Transverse colon (tissue), 4 donors: ENCODE measurements at regions of chr19 and their contacts with region 1.

Region 1: GRCh38 chr19:40549007-40549708 is 27.5 kb upstream of the SHKBP1 start:
- DNase-seq: peak; percentile 59
- H3K4me3 ChIP-seq: no peak overlapping the region
- H3K27ac ChIP-seq: no peak overlapping the region
- H3K4me1 ChIP-seq: peaks cover 0 to 5% (median 5%) of the 10 kb centered on the region in 4 donors
- H3K27me3 ChIP-seq: peaks cover 54% of the 10 kb centered on the region
- CTCF ChIP-seq: peak in 4 of 5 experiments; percentile 23 to 54 (median 42)
- EP300 ChIP-seq: no peak
- POLR2A ChIP-seq: no peak

Region 2: DNA sequence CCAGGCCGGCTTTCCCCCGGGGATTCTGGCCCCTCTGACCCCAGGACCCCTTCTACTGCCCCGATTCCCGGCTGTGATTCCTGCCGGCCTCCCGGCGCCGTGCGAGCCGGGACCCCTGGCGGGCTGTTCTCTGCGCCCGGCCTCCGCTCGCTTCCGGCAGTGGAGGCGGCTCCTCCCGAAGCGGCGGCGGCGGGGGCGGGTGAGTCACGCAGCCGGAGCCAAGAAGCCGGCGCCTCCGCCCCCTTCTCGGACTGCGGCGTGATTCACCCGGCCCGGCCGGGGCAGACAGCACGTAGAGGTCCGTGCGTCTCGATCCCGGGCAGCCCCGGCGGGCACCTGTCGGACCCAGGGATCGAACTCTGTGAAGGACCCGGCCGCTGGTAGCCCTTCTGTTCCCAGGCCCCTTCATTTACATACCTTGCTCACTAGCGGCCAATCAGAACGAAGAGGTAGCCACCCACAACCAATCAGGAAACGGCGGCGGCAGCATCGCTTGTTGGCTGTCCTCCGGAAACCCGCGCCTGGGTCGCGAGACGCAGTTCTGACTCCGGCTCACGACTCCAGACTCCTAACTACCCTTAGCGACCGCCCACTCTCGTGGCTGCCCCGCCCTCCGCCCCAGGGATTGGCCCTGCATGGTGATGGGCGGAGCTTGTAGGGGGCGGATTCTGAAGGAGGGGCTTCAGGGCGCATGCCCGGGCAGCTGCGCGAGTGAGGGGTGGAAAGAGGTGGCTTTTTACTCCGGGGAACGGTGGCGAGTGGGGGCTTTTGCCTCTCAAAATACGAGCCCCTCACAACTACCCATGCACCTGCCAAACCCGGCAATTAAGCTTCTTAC is 123.5 kb before region 1 on chr19 and contains the start of gene SERTAD1:
- in situ Hi-C with region 1: no loop called
- intact Hi-C with region 1: no loop called
- DNase-seq: peak; percentile 100
- H3K4me3 ChIP-seq: peak within 1 kb of the TSS; percentile 66 to 99 (median 85)
- H3K27ac ChIP-seq: peak within 1 kb of the TSS; percentile 97 to 100 (median 99)
- H3K4me1 ChIP-seq: peaks cover 23 to 46% (median 37%) of the 10 kb centered on the region in 4 donors
- H3K27me3 ChIP-seq: no peaks in the 10 kb centered on the region
- CTCF ChIP-seq: peak; percentile 79 to 96 (median 84)
- EP300 ChIP-seq: peak; percentile 3
- POLR2A ChIP-seq: peak; percentile 99
- total RNA-seq, gene SERTAD1: 2.6 to 30.3 (median 18.4) TPM

Region 3: DNA sequence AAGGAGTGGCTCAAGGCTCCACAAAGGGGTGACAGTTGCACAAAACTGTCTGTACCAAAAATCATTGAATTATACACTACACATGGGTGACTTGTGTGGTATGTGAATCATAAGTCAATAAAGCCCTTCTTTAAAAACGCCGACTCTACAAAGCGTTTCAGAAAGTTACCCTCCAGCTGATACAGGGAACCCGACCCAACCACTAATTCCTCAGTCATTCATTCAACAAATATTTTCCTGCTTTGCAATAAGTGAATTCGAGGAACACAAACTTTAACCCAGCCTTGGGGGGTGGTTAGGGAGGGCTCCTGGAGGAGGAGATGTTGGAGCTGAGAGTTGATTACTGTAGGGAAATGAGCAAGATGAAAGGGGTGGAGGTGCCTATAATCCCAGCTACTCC is 84.0 kb after region 1 on chr19:
- in situ Hi-C with region 1: loop called in 1 of 4 experiments (anchors 10 kb)
- intact Hi-C with region 1: no loop called
- DNase-seq: no peak
- H3K4me3 ChIP-seq: no peak overlapping the region
- H3K27ac ChIP-seq: no peak overlapping the region
- H3K4me1 ChIP-seq: peaks cover 0 to 9% (median 4%) of the 10 kb centered on the region in 4 donors
- H3K27me3 ChIP-seq: peaks cover 5% of the 10 kb centered on the region
- CTCF ChIP-seq: no peak
- EP300 ChIP-seq: no peak
- POLR2A ChIP-seq: no peak

Region 4: DNA sequence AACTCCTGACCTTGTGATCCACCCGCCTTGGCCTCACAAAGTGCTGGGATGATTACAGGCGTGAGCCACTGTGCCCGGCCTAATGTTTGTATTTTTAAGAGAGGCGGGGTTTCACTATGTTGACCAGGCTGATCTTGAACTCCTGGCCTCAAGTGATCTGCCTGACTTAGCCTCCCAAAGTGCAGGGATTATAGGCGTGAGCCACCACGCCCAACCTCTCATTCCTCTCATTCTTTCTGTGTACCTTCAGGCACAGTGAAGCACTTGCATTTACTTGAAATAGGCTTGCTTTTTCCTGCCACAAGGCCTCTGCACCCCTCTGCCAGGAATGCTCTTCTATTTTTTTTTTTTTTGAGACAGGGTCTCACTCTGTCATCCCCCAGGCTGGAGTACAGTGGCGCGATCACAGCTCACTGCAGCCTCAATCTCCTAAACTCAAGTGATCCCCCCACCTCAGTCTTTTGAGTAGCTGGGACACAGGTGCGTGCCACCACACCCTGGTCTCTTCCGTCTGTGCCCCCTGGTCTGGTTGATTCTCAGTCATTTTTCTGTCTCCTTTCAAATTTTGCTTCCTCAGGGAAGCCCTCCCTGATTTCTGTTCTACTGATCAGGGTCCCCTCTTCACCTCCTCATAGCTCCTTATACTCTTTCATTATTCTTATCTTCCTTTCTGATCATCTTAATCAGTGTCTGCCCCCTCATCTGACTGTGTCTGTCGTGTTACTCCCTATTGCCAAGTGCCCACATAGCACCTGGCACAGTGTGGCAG is 186.0 kb after region 1 on chr19:
- in situ Hi-C with region 1: no loop called
- intact Hi-C with region 1: no loop called
- DNase-seq: peak; percentile 45
- H3K4me3 ChIP-seq: no peak overlapping the region
- H3K27ac ChIP-seq: peak overlapping the region; percentile 46 to 78 (median 72)
- H3K4me1 ChIP-seq: peaks cover 0 to 18% (median 5%) of the 10 kb centered on the region in 4 donors
- H3K27me3 ChIP-seq: no peaks in the 10 kb centered on the region
- CTCF ChIP-seq: no peak
- EP300 ChIP-seq: no peak
- POLR2A ChIP-seq: no peak